ENCODE measurements at regions of chr7 and their contacts with region 1.

Region 1: GRCh38 chr7:150502519-150502918 is 12.2 kb upstream of the GIMAP7 start:
- DNase-seq: peak in 5 of 10 donors; percentile 13 to 81 (median 58)
- ATAC-seq: peak; percentile 84 to 98
- H3K4me3 Mint-ChIP-seq: peak overlapping the region; percentile 13 to 83 (median 70)
- H3K27ac Mint-ChIP-seq: peak overlapping the region; percentile 83 to 97 (median 92)
- H3K4me1 Mint-ChIP-seq: peaks cover 49 to 87% (median 85%) of the 10 kb centered on the region in 4 donors
- H3K27me3 Mint-ChIP-seq: no peaks in the 10 kb centered on the region

Region 2: DNA sequence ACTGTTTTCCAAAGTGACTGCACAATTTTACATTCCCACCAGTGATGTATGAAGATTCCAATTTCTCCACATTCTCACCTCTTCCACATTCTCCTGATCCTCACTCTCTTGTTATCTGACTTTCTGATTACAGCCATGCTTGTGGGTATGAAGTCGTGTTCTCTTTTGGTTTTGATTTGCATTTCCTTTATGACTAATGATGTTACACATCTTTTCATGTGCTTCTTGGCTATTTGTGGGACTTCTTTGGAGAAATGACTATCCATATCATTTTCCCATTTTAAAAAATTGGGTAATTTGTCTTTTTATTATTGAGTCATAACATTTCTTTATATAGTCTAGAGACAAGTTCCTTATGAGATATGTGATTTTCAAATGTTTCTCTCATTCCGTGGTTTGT is 62.6 kb before region 1 on chr7:
- POLR2A ChIA-PET with region 1: no interaction called
- DNase-seq: no peak
- ATAC-seq: peak in 1 of 2 donors; percentile 41
- H3K4me3 Mint-ChIP-seq: peak overlapping the region in 1 of 10 donors; percentile 5
- H3K27ac Mint-ChIP-seq: peak overlapping the region in 6 of 10 donors; percentile 1 to 60 (median 18)
- H3K4me1 Mint-ChIP-seq: peaks cover 7 to 30% (median 11%) of the 10 kb centered on the region in 4 donors
- H3K27me3 Mint-ChIP-seq: no peaks in the 10 kb centered on the region

Region 3: GRCh38 chr7:150489782-150490181 is 12.7 kb before region 1 on chr7:
- POLR2A ChIA-PET with region 1: interaction called, 114 read pairs
- DNase-seq: no peak
- ATAC-seq: no peak
- H3K4me3 Mint-ChIP-seq: no peak overlapping the region
- H3K27ac Mint-ChIP-seq: peak overlapping the region in 2 of 10 donors; percentile 27 to 100
- H3K4me1 Mint-ChIP-seq: peaks cover 15 to 70% (median 45%) of the 10 kb centered on the region in 4 donors
- H3K27me3 Mint-ChIP-seq: no peaks in the 10 kb centered on the region

Region 4: GRCh38 chr7:150610233-150610632 is 107.7 kb after region 1 on chr7:
- POLR2A ChIA-PET with region 1: no interaction called
- DNase-seq: no peak
- ATAC-seq: no peak
- H3K4me3 Mint-ChIP-seq: no peak overlapping the region
- H3K27ac Mint-ChIP-seq: peak overlapping the region in 6 of 10 donors; percentile 48 to 92 (median 60)
- H3K4me1 Mint-ChIP-seq: peaks cover 48 to 90% (median 78%) of the 10 kb centered on the region in 4 donors
- H3K27me3 Mint-ChIP-seq: no peaks in the 10 kb centered on the region

Measured in naive thymus-derived CD8-positive, alpha-beta T cell (primary cell).